ENCODE measurements at regions of chr12 and their contacts with region 1.

Region 1: GRCh38 chr12:47715393-47715876 is 9.6 kb upstream of the RPAP3 start:
- DNase-seq: peak; percentile 56 to 83 (median 75)
- ATAC-seq: peak; percentile 87
- H3K4me3 ChIP-seq: no peak overlapping the region
- H3K4me3 Mint-ChIP-seq: peak overlapping the region in 7 of 10 donors; percentile 15 to 54 (median 44)
- H3K27ac ChIP-seq: no peak overlapping the region
- H3K27ac Mint-ChIP-seq: peak overlapping the region; percentile 26 to 91 (median 81)
- H3K4me1 ChIP-seq: peaks cover 0 to 25% of the 10 kb centered on the region in 2 donors
- H3K4me1 Mint-ChIP-seq: peaks cover 17 to 34% (median 26%) of the 10 kb centered on the region in 7 donors
- H3K27me3 ChIP-seq: no peaks in the 10 kb centered on the region
- H3K27me3 Mint-ChIP-seq: no peaks in the 10 kb centered on the region

Region 2: DNA sequence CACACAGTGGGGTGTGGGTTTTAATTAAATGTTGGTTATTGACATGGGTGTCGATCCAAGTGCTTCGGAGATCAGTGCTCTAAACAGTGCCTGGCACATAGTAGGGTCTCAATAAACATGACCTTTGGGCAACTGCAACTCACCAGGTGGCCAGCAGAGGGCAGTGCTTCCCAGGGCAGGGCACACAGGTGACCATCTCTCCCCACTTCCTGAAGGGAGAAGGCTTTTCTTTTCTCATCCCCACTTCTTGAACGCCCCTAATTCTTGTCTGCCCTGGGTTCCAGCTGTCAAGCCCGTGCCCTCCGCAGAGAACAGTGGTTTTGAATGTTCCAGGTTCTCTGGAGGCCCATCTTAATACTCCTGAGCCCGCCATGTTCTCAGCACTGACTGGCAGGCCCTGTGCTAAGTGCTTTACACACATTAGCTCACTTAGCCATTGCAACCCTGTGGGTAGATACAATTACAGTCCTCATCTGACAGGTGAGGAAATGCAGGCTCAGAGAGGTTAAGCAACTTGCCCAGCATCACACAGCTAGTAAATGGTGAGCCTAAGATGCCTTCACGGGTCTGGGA is 26.9 kb after region 1 on chr12:
- CTCF ChIA-PET with region 1: interaction called, 67 read pairs
- POLR2A ChIA-PET with region 1: interaction called, 3 read pairs
- intact Hi-C with region 1: loop called (anchors 1 kb)
- DNase-seq: peak; percentile 41 to 84 (median 58)
- ATAC-seq: peak; percentile 65
- H3K4me3 ChIP-seq: no peak overlapping the region
- H3K4me3 Mint-ChIP-seq: peak overlapping the region in 2 of 10 donors; percentile 18 to 35
- H3K27ac ChIP-seq: no peak overlapping the region
- H3K27ac Mint-ChIP-seq: peak overlapping the region in 1 of 9 donors; percentile 44
- H3K4me1 ChIP-seq: peaks cover 13 to 14% of the 10 kb centered on the region in 2 donors
- H3K4me1 Mint-ChIP-seq: peaks cover 10 to 44% (median 29%) of the 10 kb centered on the region in 7 donors
- H3K27me3 ChIP-seq: no peaks in the 10 kb centered on the region
- H3K27me3 Mint-ChIP-seq: peaks cover 0 to 17% (median 0%) of the 10 kb centered on the region in 5 donors

Region 3: DNA sequence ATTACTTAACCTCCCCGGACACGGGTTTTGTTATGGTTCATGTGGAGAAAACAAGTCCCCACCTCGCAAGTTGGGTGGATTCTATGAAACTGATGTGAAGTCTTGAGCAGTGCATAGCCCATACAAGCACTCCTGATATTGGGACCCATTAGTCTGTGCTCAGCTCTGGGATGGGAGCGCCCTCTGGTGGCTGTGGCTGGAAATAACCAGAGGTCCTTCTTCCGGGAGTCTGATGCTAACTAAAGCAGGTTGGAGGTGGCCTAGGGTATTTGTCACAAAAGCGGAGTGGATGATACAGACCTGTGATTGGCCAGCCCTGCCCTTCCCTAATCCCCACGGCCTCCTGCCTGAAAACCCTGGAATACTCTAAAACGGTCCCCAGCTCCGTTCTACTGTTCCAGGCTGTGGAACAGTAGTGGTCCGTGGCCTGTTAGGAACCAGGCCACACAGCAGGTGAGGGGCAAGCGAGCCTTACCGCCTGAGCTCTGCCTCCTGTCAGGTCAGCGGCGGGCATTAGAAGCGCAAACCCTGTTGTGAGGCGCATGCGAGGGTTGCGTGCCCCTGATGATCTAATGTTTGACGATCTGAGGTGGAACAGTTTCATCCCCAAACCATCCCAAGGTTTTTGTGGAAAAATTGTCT is 64.0 kb after region 1 on chr12:
- CTCF ChIA-PET with region 1: interaction called, 8 read pairs
- POLR2A ChIA-PET with region 1: interaction called, 4 read pairs
- intact Hi-C with region 1: loop called (anchors 1 kb)
- DNase-seq: peak; percentile 77 to 96 (median 88)
- ATAC-seq: peak; percentile 95
- H3K4me3 ChIP-seq: no peak overlapping the region
- H3K4me3 Mint-ChIP-seq: no peak overlapping the region
- H3K27ac ChIP-seq: no peak overlapping the region
- H3K27ac Mint-ChIP-seq: peak overlapping the region; percentile 35 to 82 (median 60)
- H3K4me1 ChIP-seq: no peaks in the 10 kb centered on the region
- H3K4me1 Mint-ChIP-seq: peaks cover 19 to 46% (median 25%) of the 10 kb centered on the region in 7 donors
- H3K27me3 ChIP-seq: no peaks in the 10 kb centered on the region
- H3K27me3 Mint-ChIP-seq: no peaks in the 10 kb centered on the region

Region 4: GRCh38 chr12:47904713-47905310 is 189.4 kb after region 1 on chr12 and contains the start of gene VDR:
- CTCF ChIA-PET with region 1: interaction called, 3 read pairs
- POLR2A ChIA-PET with region 1: no interaction called
- intact Hi-C with region 1: loop called in 1 of 2 experiments (anchors 2 kb)
- DNase-seq: peak; percentile 42 to 76 (median 64)
- ATAC-seq: peak; percentile 86
- H3K4me3 ChIP-seq: peak within 1 kb of the TSS; percentile 73
- H3K4me3 Mint-ChIP-seq: peak within 1 kb of the TSS; percentile 86 to 98 (median 94)
- H3K27ac ChIP-seq: peak within 1 kb of the TSS; percentile 44
- H3K27ac Mint-ChIP-seq: peak within 1 kb of the TSS; percentile 51 to 88 (median 74)
- H3K4me1 ChIP-seq: peaks cover 25 to 41% of the 10 kb centered on the region in 2 donors
- H3K4me1 Mint-ChIP-seq: peaks cover 35 to 57% (median 47%) of the 10 kb centered on the region in 7 donors
- H3K27me3 ChIP-seq: no peaks in the 10 kb centered on the region
- H3K27me3 Mint-ChIP-seq: peaks cover 0 to 34% (median 0%) of the 10 kb centered on the region in 5 donors
- total RNA-seq, gene VDR: 1.6 to 82.6 (median 2.9) TPM

Region 5: GRCh38 chr12:48105862-48106680 is 390.6 kb after region 1 on chr12 and contains the start of gene SENP1:
- CTCF ChIA-PET with region 1: no interaction called
- POLR2A ChIA-PET with region 1: no interaction called
- intact Hi-C with region 1: loop called in 1 of 2 experiments (anchors 10 kb)
- DNase-seq: peak; percentile 81 to 93 (median 90)
- ATAC-seq: peak; percentile 88
- H3K4me3 ChIP-seq: peak within 1 kb of the TSS; percentile 89
- H3K4me3 Mint-ChIP-seq: peak within 1 kb of the TSS; percentile 88 to 96 (median 92)
- H3K27ac ChIP-seq: peak within 1 kb of the TSS; percentile 93
- H3K27ac Mint-ChIP-seq: peak within 1 kb of the TSS; percentile 90 to 100 (median 95)
- H3K4me1 ChIP-seq: peaks cover 17 to 25% of the 10 kb centered on the region in 2 donors
- H3K4me1 Mint-ChIP-seq: peaks cover 33 to 65% (median 58%) of the 10 kb centered on the region in 7 donors
- H3K27me3 ChIP-seq: no peaks in the 10 kb centered on the region
- H3K27me3 Mint-ChIP-seq: peaks cover 0 to 8% (median 0%) of the 10 kb centered on the region in 5 donors
- total RNA-seq, gene SENP1: 16.9 to 41.9 (median 31.5) TPM

Region 6: GRCh38 chr12:48454667-48455066 is 739.2 kb after region 1 on chr12:
- CTCF ChIA-PET with region 1: no interaction called
- POLR2A ChIA-PET with region 1: no interaction called
- intact Hi-C with region 1: loop called in 1 of 2 experiments (anchors 1 kb)
- DNase-seq: peak in 7 of 9 donors; percentile 13 to 57 (median 32)
- ATAC-seq: peak; percentile 73
- H3K4me3 ChIP-seq: no peak overlapping the region
- H3K4me3 Mint-ChIP-seq: no peak overlapping the region
- H3K27ac ChIP-seq: no peak overlapping the region
- H3K27ac Mint-ChIP-seq: no peak overlapping the region
- H3K4me1 ChIP-seq: no peaks in the 10 kb centered on the region
- H3K4me1 Mint-ChIP-seq: no peaks in the 10 kb centered on the region
- H3K27me3 ChIP-seq: no peaks in the 10 kb centered on the region
- H3K27me3 Mint-ChIP-seq: peaks cover 0 to 18% (median 8%) of the 10 kb centered on the region in 5 donors

Measured in naive thymus-derived CD4-positive, alpha-beta T cell (primary cell).